CD14-positive monocyte (primary cell): ENCODE measurements at regions of chr1 and their contacts with region 1.

Region 1: DNA sequence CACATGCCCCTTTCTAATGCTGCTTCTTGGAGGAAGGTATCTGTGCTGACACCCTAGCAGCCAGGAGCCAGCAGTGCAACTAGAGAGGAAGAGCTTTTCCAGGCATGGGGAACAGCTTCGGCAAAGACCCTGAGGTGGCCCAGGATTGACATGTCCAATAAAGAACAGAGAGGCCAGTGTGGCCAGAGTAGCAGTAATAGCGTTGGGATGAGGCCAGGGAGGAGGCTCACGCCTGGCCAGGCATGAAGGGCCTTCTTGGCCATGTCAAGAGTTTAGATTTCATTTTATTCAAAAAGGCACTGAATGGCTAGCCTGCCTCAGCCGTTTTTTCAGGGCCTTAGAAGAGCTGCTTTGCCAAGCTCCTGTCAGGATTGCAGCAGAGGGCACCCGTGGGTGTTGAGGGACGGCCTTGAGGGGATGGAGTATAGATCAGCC is 16.3 kb upstream of the ADAMTSL4 start:
- DNase-seq: no peak
- H3K4me3 ChIP-seq: no peak overlapping the region
- H3K4me3 Mint-ChIP-seq: no peak overlapping the region
- H3K27ac ChIP-seq: no peak overlapping the region
- H3K27ac Mint-ChIP-seq: peak overlapping the region in 1 of 7 donors; percentile 34
- H3K4me1 ChIP-seq: no peaks in the 10 kb centered on the region
- H3K4me1 Mint-ChIP-seq: peaks cover 5% of the 10 kb centered on the region
- H3K27me3 ChIP-seq: no peaks in the 10 kb centered on the region
- H3K27me3 Mint-ChIP-seq: peaks cover 0 to 2% (median 0%) of the 10 kb centered on the region in 3 donors
- CTCF ChIP-seq: peak; percentile 56

Region 2: GRCh38 chr1:150469291-150469690 is 63.6 kb before region 1 on chr1:
- intact Hi-C with region 1: loop called in 1 of 2 experiments (anchors 5 kb)
- DNase-seq: no peak
- H3K4me3 ChIP-seq: no peak overlapping the region
- H3K4me3 Mint-ChIP-seq: no peak overlapping the region
- H3K27ac ChIP-seq: no peak overlapping the region
- H3K27ac Mint-ChIP-seq: no peak overlapping the region
- H3K4me1 ChIP-seq: no peaks in the 10 kb centered on the region
- H3K4me1 Mint-ChIP-seq: peaks cover 1% of the 10 kb centered on the region
- H3K27me3 ChIP-seq: no peaks in the 10 kb centered on the region
- H3K27me3 Mint-ChIP-seq: peaks cover 0 to 2% (median 0%) of the 10 kb centered on the region in 3 donors
- CTCF ChIP-seq: no peak

Region 3: DNA sequence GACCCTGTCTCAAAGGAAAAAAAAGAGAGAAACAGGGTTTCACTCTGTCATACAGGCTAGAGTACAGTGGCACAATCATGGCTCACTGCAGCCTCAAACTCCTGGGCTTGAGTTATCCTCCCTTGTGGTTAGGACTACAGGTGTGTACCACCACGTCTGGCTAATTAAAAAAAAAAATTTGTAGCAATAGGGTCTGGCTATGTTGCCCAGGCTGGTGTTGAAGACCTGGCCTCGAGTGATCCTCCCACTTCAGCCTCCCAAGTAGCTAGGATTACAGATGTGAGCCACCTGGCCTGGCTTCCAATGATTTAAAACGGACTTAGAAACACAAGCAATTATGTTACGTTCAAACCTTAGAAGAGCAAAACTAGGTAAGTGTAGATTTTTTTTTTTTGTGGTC is 142.0 kb after region 1 on chr1:
- intact Hi-C with region 1: no loop called
- DNase-seq: no peak
- H3K4me3 ChIP-seq: no peak overlapping the region
- H3K4me3 Mint-ChIP-seq: no peak overlapping the region
- H3K27ac ChIP-seq: no peak overlapping the region
- H3K27ac Mint-ChIP-seq: peak overlapping the region in 1 of 7 donors; percentile 32
- H3K4me1 ChIP-seq: no peaks in the 10 kb centered on the region
- H3K4me1 Mint-ChIP-seq: peaks cover 3% of the 10 kb centered on the region
- H3K27me3 ChIP-seq: no peaks in the 10 kb centered on the region
- H3K27me3 Mint-ChIP-seq: no peaks in the 10 kb centered on the region
- CTCF ChIP-seq: no peak